Esophagus muscularis mucosa (tissue), 4 donors: ENCODE measurements at regions of chr7 and their contacts with region 1.

Region 1: DNA sequence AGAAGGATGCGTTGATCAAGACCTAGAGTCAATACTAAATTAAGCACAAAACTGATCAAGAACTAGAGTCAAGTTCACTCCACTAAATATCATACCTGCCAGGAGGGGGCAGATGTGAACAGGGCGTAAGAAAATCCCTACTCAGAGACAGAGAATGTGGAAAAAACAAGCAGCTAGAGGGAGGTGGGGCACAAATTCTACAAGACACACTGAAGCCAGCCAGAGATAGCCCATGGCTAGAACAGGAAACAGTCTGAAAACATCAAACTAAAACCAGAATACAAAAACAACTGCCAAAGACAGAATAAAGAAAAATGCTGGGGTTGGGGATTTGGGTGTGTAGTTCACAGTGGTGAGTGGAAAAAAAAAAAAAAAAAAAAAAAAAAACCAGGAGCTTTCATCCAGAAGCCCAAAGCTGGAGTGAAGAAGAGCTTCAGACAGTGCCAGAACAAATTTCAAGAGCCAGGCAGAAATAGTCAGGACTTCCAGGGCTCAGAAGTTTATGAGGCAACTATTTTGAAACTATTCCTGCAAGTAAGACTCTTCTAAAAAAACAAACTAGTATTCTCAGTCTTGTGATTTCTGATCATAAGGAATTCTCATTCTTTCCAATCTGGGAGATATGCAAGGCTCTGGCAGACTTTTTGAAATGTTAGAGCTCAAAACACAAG is 118.3 kb downstream of the CCDC71L start:
- DNase-seq: peak; percentile 89
- H3K4me3 ChIP-seq: no peak overlapping the region
- H3K27ac ChIP-seq: peak overlapping the region; percentile 68 to 80 (median 72)
- H3K4me1 ChIP-seq: peaks cover 6 to 24% (median 18%) of the 10 kb centered on the region in 4 donors
- H3K27me3 ChIP-seq: no peaks in the 10 kb centered on the region
- CTCF ChIP-seq: peak; percentile 58 to 63 (median 60)
- EP300 ChIP-seq: no peak
- POLR2A ChIP-seq: no peak

Region 2: GRCh38 chr7:106448992-106449859 is 93.5 kb before region 1 on chr7:
- intact Hi-C with region 1: no loop called
- DNase-seq: no peak
- H3K4me3 ChIP-seq: no peak overlapping the region
- H3K27ac ChIP-seq: no peak overlapping the region
- H3K4me1 ChIP-seq: no peaks in the 10 kb centered on the region
- H3K27me3 ChIP-seq: no peaks in the 10 kb centered on the region
- CTCF ChIP-seq: no peak
- EP300 ChIP-seq: no peak
- POLR2A ChIP-seq: no peak

Region 3: GRCh38 chr7:106659963-106660861 is 117.5 kb after region 1 on chr7:
- intact Hi-C with region 1: loop called (anchors 2 kb)
- DNase-seq: no peak
- H3K4me3 ChIP-seq: peak overlapping the region; percentile 65 to 94 (median 88)
- H3K27ac ChIP-seq: peak overlapping the region; percentile 96 to 99 (median 96)
- H3K4me1 ChIP-seq: peaks cover 14 to 32% (median 27%) of the 10 kb centered on the region in 4 donors
- H3K27me3 ChIP-seq: no peaks in the 10 kb centered on the region
- CTCF ChIP-seq: peak; percentile 46 to 90 (median 68)
- EP300 ChIP-seq: no peak
- POLR2A ChIP-seq: no peak